Ovary (tissue), 10 donors: ENCODE measurements at regions of chr19 and their contacts with region 1.

Region 1: GRCh38 chr19:843180-843835 is 2.5 kb downstream of the PRTN3 start:
- DNase-seq: no peak
- H3K4me3 ChIP-seq: no peak overlapping the region
- H3K27ac ChIP-seq: no peak overlapping the region
- H3K4me1 ChIP-seq: peaks cover 13% of the 10 kb centered on the region
- H3K27me3 ChIP-seq: peaks cover 11% of the 10 kb centered on the region
- CTCF ChIP-seq: no peak
- EP300 ChIP-seq: no peak
- POLR2A ChIP-seq: no peak

Region 2: GRCh38 chr19:728011-728410 is 115.3 kb before region 1 on chr19:
- intact Hi-C with region 1: no loop called
- DNase-seq: peak in 3 of 5 donors; percentile 14 to 59 (median 56)
- H3K4me3 ChIP-seq: no peak overlapping the region
- H3K27ac ChIP-seq: peak overlapping the region in 1 of 2 donors; percentile 6
- H3K4me1 ChIP-seq: no peaks in the 10 kb centered on the region
- H3K27me3 ChIP-seq: no peaks in the 10 kb centered on the region
- CTCF ChIP-seq: no peak
- EP300 ChIP-seq: no peak
- POLR2A ChIP-seq: no peak

Region 3: DNA sequence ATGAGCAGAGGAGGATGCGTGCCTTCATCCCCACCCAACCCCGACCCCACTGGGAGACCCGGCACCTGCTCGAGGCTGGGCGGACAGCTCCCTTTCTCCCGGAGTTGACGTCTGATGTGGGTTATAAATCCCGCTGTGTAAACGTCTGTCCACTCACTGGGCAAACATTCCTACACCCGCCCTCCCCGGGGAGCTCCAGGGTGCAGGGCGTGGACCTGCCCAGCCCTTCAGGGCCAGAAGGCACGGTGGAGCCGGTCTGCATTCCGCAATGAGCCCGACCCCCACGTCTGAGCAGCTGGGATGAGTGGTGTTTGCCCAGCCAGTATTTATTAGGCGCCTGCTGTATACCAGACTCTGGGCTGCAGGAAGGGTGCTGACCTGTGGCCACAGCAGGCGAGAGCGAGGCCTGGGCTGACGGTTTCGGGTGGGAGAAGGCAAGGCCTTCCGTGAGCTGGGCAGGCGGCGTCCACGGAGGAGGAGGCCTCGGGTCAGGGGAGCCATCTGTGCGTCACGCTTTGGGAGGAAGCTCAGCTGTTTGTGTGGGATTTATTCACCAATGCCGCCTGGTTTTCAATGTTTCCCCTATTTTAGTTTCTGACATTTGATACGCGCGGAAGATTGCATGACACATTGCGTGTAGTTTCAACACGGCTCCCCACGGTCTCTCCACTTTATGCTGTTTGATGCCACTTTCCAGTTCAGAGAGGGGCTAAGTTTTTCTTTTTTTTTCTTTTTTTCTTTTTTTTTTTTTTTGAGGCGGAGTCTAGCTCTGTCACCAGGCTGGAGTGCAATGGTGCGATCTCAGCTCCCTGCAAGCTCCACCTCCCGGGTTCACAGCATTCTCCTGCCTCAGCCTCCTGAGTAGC is 90.4 kb before region 1 on chr19:
- intact Hi-C with region 1: loop called in 1 of 4 experiments (anchors 10 kb)
- DNase-seq: peak; percentile 76 to 85 (median 78)
- H3K4me3 ChIP-seq: no peak overlapping the region
- H3K27ac ChIP-seq: peak overlapping the region; percentile 61 to 73
- H3K4me1 ChIP-seq: peaks cover 5% of the 10 kb centered on the region
- H3K27me3 ChIP-seq: no peaks in the 10 kb centered on the region
- CTCF ChIP-seq: no peak
- EP300 ChIP-seq: no peak
- POLR2A ChIP-seq: no peak

Region 4: DNA sequence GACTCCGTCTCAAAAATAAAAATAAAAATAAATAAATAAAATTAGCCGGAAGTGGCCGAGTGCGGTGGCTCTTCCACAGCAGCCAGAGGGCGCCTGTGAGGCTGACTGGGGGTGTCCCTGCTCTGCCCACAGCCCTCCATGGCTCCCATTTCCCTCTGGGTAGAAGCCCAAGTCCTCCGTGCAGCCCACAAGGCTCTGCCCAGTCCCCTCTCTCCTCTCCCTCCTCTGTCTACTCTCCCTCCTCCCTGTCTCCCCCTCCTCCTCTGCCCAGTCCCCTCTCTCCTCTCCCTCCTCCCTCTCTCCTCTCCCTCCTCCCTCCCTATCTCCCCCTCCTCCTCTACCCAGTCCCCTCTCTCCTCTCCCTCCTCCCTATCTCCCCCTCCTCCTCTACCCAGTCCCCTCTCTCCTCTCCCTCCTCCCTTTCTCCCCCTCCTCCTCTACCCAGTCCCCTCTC is 71.9 kb before region 1 on chr19:
- intact Hi-C with region 1: no loop called
- DNase-seq: no peak
- H3K4me3 ChIP-seq: no peak overlapping the region
- H3K27ac ChIP-seq: no peak overlapping the region
- H3K4me1 ChIP-seq: no peaks in the 10 kb centered on the region
- H3K27me3 ChIP-seq: no peaks in the 10 kb centered on the region
- CTCF ChIP-seq: no peak
- EP300 ChIP-seq: no peak
- POLR2A ChIP-seq: no peak